Activated CD4-positive, alpha-beta memory T cell treated with anti-CD3 and anti-CD28 coated beads for 36 hours (primary cell): ENCODE measurements at regions of chr4 and their contacts with region 1.

Region 1: GRCh38 chr4:99949034-99949998 is 759 bp downstream of the H2AZ1 start:
- DNase-seq: peak; percentile 95
- H3K4me3 Mint-ChIP-seq: no peak overlapping the region
- H3K27ac Mint-ChIP-seq: no peak overlapping the region
- H3K4me1 Mint-ChIP-seq: peaks cover 35% of the 10 kb centered on the region
- H3K27me3 Mint-ChIP-seq: no peaks in the 10 kb centered on the region

Region 2: DNA sequence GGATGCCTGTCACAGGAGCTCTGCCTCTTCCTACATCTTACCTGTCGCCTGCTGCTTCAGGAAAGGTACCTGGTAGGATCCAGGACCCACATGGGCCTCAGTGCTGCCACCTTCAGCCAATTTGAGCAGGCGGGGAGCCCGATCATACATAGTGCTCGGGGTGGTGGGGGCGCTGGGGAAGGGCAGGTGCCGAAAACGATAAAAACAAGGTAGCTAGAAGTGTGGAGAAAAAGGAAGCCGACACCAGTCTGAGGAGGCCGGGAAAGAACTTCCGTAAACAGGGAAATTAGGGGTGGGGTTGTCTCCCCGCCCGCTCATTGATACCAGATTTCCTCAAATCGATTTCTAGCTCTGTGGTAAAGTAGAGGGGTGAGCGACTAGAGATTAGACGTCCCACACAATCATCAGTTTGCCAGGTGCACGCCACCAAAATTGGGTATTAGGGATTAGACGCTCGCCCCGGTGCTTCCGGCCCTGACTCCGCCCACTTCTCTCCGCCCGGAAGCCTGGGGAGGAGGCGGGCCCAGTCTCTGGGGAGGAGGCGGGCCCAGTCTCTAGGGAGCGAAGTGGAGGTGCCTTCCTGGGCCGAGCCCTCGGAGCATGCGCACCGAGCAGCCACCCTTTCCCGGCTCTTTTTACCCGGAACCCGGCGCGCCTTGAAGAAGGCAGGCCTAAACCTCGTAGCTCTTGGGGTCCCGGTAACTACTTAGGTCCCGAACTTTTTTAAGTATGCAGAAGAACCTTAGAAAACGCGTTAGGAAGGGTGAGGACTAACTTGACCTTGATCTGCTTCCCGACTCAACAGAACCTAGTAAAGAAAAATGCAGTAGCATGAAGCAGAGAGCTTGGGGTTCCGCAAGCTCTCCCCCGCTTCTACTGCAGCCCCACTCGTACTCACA is 1806.1 kb before region 1 on chr4 and contains the start of gene STPG2:
- CTCF ChIA-PET with region 1: no interaction called
- POLR2A ChIA-PET with region 1: no interaction called
- intact Hi-C with region 1: loop called (anchors 2 kb)
- DNase-seq: peak; percentile 95
- H3K4me3 Mint-ChIP-seq: peak within 1 kb of the TSS; percentile 95
- H3K27ac Mint-ChIP-seq: peak within 1 kb of the TSS; percentile 98
- H3K4me1 Mint-ChIP-seq: peaks cover 20% of the 10 kb centered on the region
- H3K27me3 Mint-ChIP-seq: no peaks in the 10 kb centered on the region
- total RNA-seq, gene STPG2: not detected

Region 3: GRCh38 chr4:98995183-98996055 is 953.9 kb before region 1 on chr4 and contains the start of gene METAP1:
- CTCF ChIA-PET with region 1: interaction called, 3 read pairs
- POLR2A ChIA-PET with region 1: no interaction called
- intact Hi-C with region 1: loop called (anchors 5 kb)
- DNase-seq: peak; percentile 97
- H3K4me3 Mint-ChIP-seq: peak within 1 kb of the TSS; percentile 88
- H3K27ac Mint-ChIP-seq: peak within 1 kb of the TSS; percentile 96
- H3K4me1 Mint-ChIP-seq: peaks cover 37% of the 10 kb centered on the region
- H3K27me3 Mint-ChIP-seq: no peaks in the 10 kb centered on the region
- total RNA-seq, gene METAP1: 60.7 to 61.1 TPM

Region 4: GRCh38 chr4:99504804-99505569 is 444.3 kb before region 1 on chr4:
- CTCF ChIA-PET with region 1: no interaction called
- POLR2A ChIA-PET with region 1: no interaction called
- intact Hi-C with region 1: loop called (anchors 1 kb)
- DNase-seq: no peak
- H3K4me3 Mint-ChIP-seq: no peak overlapping the region
- H3K27ac Mint-ChIP-seq: no peak overlapping the region
- H3K4me1 Mint-ChIP-seq: peaks cover 46% of the 10 kb centered on the region
- H3K27me3 Mint-ChIP-seq: no peaks in the 10 kb centered on the region

Region 5: DNA sequence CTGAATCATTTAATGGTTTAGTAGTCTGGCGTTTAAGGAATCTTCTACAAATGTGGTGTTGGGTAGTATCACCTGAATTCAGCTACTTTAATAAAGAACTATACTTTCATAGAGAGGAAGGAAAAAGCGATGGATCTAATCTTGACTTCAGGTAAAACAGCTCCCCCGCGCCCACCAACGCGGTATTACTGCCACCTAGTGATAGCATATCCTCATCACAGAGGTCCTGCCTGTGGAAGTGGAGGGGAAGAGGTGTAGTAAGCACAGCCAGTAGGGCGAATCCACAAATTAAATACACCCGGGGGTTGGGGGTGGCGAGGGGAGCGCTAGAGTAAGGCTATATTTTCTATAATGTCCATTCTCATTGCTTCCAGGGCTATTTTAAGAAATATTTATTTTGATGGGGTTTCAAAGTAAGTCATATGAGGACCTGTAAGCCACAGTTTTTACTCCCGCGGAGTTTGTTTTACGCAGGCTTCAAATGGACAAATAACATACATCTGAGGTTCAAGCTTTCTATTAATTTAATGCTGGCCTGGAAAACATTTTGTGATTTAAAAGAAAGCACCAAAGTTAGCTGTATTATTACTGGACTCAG is 141.0 kb before region 1 on chr4:
- CTCF ChIA-PET with region 1: interaction called, 24 read pairs
- POLR2A ChIA-PET with region 1: interaction called, 3 read pairs
- intact Hi-C with region 1: loop called (anchors 1 kb)
- DNase-seq: peak; percentile 85
- H3K4me3 Mint-ChIP-seq: no peak overlapping the region
- H3K27ac Mint-ChIP-seq: no peak overlapping the region
- H3K4me1 Mint-ChIP-seq: no peaks in the 10 kb centered on the region
- H3K27me3 Mint-ChIP-seq: peaks cover 3% of the 10 kb centered on the region

Region 6: DNA sequence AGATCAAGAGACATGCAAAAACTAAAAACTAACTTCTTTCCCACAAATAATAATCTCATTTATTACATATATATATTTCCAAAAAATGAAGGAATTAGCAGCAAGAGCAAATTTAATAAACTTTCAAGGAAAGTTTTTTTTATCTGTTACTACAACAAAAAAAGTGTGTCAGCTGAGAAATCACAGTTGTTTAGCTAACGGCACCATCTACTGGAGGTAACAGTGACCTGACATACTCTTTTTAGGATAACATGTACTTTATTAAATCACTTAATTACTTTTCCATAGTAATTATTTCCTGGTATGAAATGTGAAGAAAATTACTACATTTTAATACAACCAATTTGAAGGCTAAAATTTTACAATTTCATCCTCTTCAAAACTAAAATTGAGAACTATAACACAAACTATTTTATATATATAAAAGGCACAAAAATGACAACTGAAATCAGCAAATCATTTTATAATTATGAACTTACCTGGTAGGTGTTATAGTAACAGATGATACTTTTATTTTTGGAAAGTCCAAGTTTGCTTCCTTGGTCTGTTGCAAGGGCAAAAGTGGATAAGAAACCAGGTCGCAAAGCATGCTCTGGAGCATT is 64.2 kb before region 1 on chr4:
- CTCF ChIA-PET with region 1: interaction called, 11 read pairs
- POLR2A ChIA-PET with region 1: no interaction called
- intact Hi-C with region 1: no loop called
- DNase-seq: peak; percentile 19
- H3K4me3 Mint-ChIP-seq: no peak overlapping the region
- H3K27ac Mint-ChIP-seq: no peak overlapping the region
- H3K4me1 Mint-ChIP-seq: peaks cover 6% of the 10 kb centered on the region
- H3K27me3 Mint-ChIP-seq: no peaks in the 10 kb centered on the region

Region 7: GRCh38 chr4:100082852-100083251 is 133.5 kb after region 1 on chr4:
- CTCF ChIA-PET with region 1: no interaction called
- POLR2A ChIA-PET with region 1: interaction called, 3 read pairs
- intact Hi-C with region 1: loop called (anchors 2 kb)
- DNase-seq: no peak
- H3K4me3 Mint-ChIP-seq: no peak overlapping the region
- H3K27ac Mint-ChIP-seq: peak overlapping the region; percentile 64
- H3K4me1 Mint-ChIP-seq: peaks cover 37% of the 10 kb centered on the region
- H3K27me3 Mint-ChIP-seq: peaks cover 7% of the 10 kb centered on the region